ENCODE measurements at regions of chr6 and their contacts with region 1.

Region 1: GRCh38 chr6:25250878-25251277 is 28.3 kb upstream of the CARMIL1 start:
- DNase-seq: peak; percentile 69
- H3K4me3 ChIP-seq: no peak overlapping the region
- H3K27ac ChIP-seq: no peak overlapping the region
- H3K4me1 ChIP-seq: peaks cover 11% of the 10 kb centered on the region
- H3K27me3 ChIP-seq: no peaks in the 10 kb centered on the region

Region 2: GRCh38 chr6:25556516-25556915 is 305.6 kb after region 1 on chr6:
- in situ Hi-C with region 1: loop called (anchors 25 kb)
- DNase-seq: peak; percentile 72
- H3K4me3 ChIP-seq: no peak overlapping the region
- H3K27ac ChIP-seq: no peak overlapping the region
- H3K4me1 ChIP-seq: no peaks in the 10 kb centered on the region
- H3K27me3 ChIP-seq: no peaks in the 10 kb centered on the region

Measured in GM23248 (cell line).